ENCODE measurements at regions of chr5 and their contacts with region 1.

Region 1: DNA sequence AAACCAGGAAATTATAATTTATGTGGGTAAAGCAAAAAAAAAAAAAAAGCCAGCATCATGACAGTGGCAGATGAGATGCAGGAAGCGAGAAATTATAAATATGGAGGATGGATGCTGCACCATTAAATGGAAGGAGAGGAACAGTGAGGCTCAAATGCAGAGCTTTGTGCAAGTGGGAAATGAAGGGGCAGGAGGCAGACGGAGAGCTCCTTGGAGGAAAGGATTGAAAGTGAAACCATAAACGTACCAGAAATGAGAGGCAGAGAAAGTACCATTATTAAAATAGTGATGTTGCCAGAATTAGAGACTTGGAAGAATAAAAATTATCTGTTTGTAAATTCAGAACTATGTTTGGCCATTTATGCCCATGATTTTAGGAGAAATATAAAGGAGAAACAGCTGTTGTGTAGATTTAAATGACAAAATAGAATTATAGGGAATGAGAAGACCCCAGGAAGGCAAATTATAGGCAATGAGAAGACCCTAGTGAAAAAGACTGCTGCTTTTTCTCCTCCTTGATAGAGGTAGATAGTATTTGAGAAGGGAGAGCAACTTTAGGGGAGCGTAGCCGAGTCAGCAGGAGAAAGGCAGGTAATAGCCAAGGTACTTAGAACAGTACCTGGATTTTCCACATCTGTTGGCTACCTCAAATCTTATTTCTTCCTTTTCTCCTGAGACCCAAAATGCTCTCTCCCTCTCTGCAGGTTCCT is 341.0 kb upstream of the CD180 start:
- DNase-seq: no peak
- ATAC-seq: peak in 2 of 4 donors; percentile 32 to 47
- H3K4me3 ChIP-seq: peak overlapping the region; percentile 45
- H3K27ac ChIP-seq: no peak overlapping the region
- H3K4me1 ChIP-seq: peaks cover 18% of the 10 kb centered on the region
- H3K27me3 ChIP-seq: no peaks in the 10 kb centered on the region
- CTCF ChIP-seq: no peak

Region 2: GRCh38 chr5:67476531-67476930 is 61.1 kb before region 1 on chr5:
- intact Hi-C with region 1: loop called in 1 of 2 experiments (anchors 10 kb)
- DNase-seq: no peak
- ATAC-seq: no peak
- H3K4me3 ChIP-seq: no peak overlapping the region
- H3K27ac ChIP-seq: peak overlapping the region; percentile 88
- H3K4me1 ChIP-seq: peaks cover 13% of the 10 kb centered on the region
- H3K27me3 ChIP-seq: no peaks in the 10 kb centered on the region
- CTCF ChIP-seq: no peak

Region 3: GRCh38 chr5:67588389-67588788 is 50.8 kb after region 1 on chr5:
- intact Hi-C with region 1: no loop called
- DNase-seq: no peak
- ATAC-seq: no peak
- H3K4me3 ChIP-seq: no peak overlapping the region
- H3K27ac ChIP-seq: no peak overlapping the region
- H3K4me1 ChIP-seq: no peaks in the 10 kb centered on the region
- H3K27me3 ChIP-seq: no peaks in the 10 kb centered on the region
- CTCF ChIP-seq: no peak